K562 (cell line): ENCODE measurements at regions of chr10 and their contacts with region 1.

Region 1: DNA sequence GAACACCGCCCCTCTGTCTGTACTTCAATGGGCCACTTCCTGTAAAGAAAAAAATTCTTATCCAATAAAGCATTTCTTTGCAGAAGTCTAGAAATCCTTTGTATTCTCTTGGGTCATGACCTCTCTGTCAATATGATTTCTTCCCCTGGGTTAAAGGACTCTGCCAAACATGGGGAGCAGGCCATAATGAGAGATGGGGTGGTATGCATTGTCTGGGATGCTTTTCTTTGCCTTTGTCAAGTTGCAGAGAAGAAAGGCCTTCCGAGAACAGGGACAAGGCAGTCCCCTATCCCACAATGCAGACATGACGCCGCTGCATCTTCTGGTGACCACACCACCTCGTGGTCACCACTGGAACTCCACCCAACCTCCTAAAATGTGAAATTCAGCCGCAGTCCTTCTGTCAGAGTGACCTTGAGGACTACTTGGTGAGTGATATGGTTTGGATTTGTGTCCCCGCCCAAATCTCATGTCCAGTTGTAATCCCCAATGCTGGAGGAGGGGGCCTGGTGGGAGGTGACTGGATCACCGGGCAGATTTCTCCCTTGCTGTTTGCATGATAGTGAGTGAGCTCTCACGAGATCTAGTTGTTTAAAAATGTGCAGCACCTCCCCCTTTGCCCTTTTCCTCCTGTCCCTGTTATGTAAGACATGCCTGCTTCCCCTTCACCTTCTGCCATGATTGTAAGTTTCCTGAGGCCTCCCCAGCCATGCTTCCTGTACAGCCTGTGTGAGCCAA is 15.2 kb upstream of the FRMPD2 start:
- DNase-seq: peak; percentile 73 to 89 (median 82)
- ATAC-seq: peak; percentile 96
- H3K4me3 ChIP-seq: no peak overlapping the region
- H3K27ac ChIP-seq: no peak overlapping the region
- H3K4me1 ChIP-seq: peaks cover 3 to 18% of the 10 kb centered on the region in 2 experiments; a peak in 4 of 5 replicates
- H3K27me3 ChIP-seq: peaks cover 2 to 11% of the 10 kb centered on the region in 2 experiments; a peak in 4 of 5 replicates
- CTCF ChIP-seq: peak; percentile 88 to 95 (median 90)
- EP300 ChIP-seq: no peak
- POLR2A ChIP-seq: no peak
- RAD21 ChIP-seq: peak; percentile 45 to 79

Region 2: GRCh38 chr10:48187713-48188485 is 101.8 kb before region 1 on chr10:
- CTCF ChIA-PET with region 1: no interaction called
- POLR2A ChIA-PET with region 1: no interaction called
- in situ Hi-C with region 1: no loop called
- intact Hi-C with region 1: no loop called
- DNase-seq: no peak
- ATAC-seq: no peak
- H3K4me3 ChIP-seq: no peak overlapping the region
- H3K27ac ChIP-seq: no peak overlapping the region
- H3K4me1 ChIP-seq: peaks cover 4 to 7% of the 10 kb centered on the region in 2 experiments; a peak in 2 of 5 replicates
- H3K27me3 ChIP-seq: peaks cover 9 to 41% of the 10 kb centered on the region in 2 experiments; a peak in 4 of 5 replicates
- CTCF ChIP-seq: no peak
- EP300 ChIP-seq: no peak
- POLR2A ChIP-seq: no peak
- RAD21 ChIP-seq: no peak

Region 3: DNA sequence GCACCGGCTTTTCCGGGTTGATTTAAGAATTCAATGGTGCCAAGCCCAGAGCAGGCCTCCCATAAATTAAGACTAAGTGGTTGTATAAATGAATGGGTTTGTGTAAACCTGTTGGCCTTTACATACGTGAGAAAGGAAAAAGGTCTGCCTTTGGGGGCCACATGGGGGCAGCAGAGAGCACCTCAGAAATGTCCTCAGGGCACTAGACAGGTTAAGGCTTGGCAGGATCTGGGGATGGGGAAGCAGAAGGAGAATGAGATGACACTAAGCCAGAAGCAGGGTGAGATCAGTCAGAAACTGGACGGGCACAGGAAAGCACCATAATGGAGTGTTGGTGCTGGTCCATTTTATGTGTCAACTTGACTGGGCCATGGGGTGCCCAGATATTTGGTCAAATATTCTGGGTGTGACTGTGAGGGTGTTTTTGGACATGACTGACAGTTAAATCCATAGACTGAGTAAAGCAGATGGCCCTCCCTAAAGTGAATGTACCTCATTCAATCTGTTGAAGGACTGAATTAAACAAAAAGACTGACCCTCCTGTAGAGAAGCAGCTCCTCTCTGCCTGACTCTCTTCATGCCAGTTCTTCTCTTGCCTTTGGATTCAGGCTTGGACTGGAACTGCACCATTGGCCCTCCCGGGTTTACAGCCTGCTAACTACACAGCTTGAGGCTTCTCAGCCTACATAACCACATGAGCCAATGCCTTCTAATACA is 74.0 kb before region 1 on chr10:
- CTCF ChIA-PET with region 1: interaction called, 10 read pairs
- POLR2A ChIA-PET with region 1: interaction called, 3 read pairs
- in situ Hi-C with region 1: no loop called
- intact Hi-C with region 1: loop called (anchors 2 kb)
- DNase-seq: peak; percentile 60 to 79 (median 75)
- ATAC-seq: peak; percentile 98
- H3K4me3 ChIP-seq: no peak overlapping the region
- H3K27ac ChIP-seq: no peak overlapping the region
- H3K4me1 ChIP-seq: no peaks in the 10 kb centered on the region
- H3K27me3 ChIP-seq: peaks cover 0 to 12% of the 10 kb centered on the region in 2 experiments; a peak in 3 of 5 replicates
- CTCF ChIP-seq: peak; percentile 88 to 92 (median 91)
- EP300 ChIP-seq: no peak
- POLR2A ChIP-seq: no peak
- RAD21 ChIP-seq: peak; percentile 44 to 80; a peak in 3 of 4 replicates